CD8-positive, alpha-beta T cell (primary cell): ENCODE measurements at regions of chr1 and their contacts with region 1.

Region 1: DNA sequence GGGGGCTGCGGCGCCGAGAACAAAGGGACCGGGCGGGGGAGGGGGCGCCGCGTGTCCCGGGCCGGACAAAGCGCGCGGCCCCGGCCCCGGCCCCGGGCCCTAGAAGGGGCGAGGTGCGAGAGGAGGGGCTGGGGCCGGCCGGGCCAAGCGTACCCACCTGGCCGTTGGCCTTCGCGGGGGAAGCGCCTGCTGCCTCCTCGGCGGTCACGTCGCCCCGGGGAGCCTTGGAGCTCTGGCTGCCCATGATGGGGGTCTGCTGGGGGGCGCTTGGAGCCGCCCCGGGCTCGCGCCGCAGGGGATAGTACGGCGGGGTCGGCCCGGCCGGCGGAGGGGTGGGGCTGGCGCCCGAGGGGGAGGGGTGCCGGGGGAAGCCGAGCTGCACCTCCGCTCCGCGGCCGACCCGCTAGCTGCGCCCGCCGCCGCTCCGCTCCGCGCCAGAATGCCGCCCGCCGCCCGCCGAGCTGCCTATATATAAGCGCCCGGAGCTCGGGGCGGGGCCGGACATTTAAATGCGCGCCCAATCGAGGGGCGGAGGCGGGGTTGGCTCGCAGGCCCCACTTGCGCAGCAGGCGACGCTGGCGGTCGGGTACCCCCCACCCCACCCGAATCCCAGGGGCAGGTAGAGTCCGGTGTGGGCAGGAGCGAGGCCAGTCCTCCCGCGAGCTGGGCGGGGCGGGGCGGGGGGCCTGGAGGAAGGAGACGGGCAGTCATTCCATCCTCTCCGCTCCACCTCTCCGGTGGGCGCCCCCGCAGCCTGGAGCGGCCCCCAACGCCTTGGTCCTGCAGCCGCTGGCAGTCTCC is at the start of gene MARCKSL1:
- DNase-seq: peak; percentile 75 to 94 (median 86)
- ATAC-seq: peak; percentile 70
- H3K4me3 ChIP-seq: peak within 1 kb of the TSS; percentile 45 to 50
- H3K4me3 Mint-ChIP-seq: peak within 1 kb of the TSS; percentile 83
- H3K27ac ChIP-seq: peak within 1 kb of the TSS in 1 of 2 experiments; percentile 22
- H3K27ac Mint-ChIP-seq: peak within 1 kb of the TSS; percentile 77
- H3K4me1 ChIP-seq: peaks cover 27% of the 10 kb centered on the region
- H3K4me1 Mint-ChIP-seq: peaks cover 35% of the 10 kb centered on the region
- H3K27me3 ChIP-seq: no peaks in the 10 kb centered on the region
- H3K27me3 Mint-ChIP-seq: no peaks in the 10 kb centered on the region
- CTCF ChIP-seq: no peak
- total RNA-seq, gene MARCKSL1: 30.5 to 30.7 TPM

Region 2: GRCh38 chr1:32240140-32240951 is 95.6 kb before region 1 on chr1:
- CTCF ChIA-PET with region 1: interaction called, 5 read pairs
- POLR2A ChIA-PET with region 1: interaction called, 33 read pairs
- intact Hi-C with region 1: loop called in 1 of 2 experiments (anchors 2 kb)
- DNase-seq: peak in 8 of 9 experiments; percentile 26 to 85 (median 76)
- ATAC-seq: peak; percentile 69
- H3K4me3 ChIP-seq: peak overlapping the region; percentile 76 to 89
- H3K4me3 Mint-ChIP-seq: peak overlapping the region; percentile 90
- H3K27ac ChIP-seq: peak overlapping the region; percentile 22 to 49
- H3K27ac Mint-ChIP-seq: peak overlapping the region; percentile 62
- H3K4me1 ChIP-seq: peaks cover 26% of the 10 kb centered on the region
- H3K4me1 Mint-ChIP-seq: peaks cover 23% of the 10 kb centered on the region
- H3K27me3 ChIP-seq: no peaks in the 10 kb centered on the region
- H3K27me3 Mint-ChIP-seq: no peaks in the 10 kb centered on the region
- CTCF ChIP-seq: peak; percentile 24

Region 3: DNA sequence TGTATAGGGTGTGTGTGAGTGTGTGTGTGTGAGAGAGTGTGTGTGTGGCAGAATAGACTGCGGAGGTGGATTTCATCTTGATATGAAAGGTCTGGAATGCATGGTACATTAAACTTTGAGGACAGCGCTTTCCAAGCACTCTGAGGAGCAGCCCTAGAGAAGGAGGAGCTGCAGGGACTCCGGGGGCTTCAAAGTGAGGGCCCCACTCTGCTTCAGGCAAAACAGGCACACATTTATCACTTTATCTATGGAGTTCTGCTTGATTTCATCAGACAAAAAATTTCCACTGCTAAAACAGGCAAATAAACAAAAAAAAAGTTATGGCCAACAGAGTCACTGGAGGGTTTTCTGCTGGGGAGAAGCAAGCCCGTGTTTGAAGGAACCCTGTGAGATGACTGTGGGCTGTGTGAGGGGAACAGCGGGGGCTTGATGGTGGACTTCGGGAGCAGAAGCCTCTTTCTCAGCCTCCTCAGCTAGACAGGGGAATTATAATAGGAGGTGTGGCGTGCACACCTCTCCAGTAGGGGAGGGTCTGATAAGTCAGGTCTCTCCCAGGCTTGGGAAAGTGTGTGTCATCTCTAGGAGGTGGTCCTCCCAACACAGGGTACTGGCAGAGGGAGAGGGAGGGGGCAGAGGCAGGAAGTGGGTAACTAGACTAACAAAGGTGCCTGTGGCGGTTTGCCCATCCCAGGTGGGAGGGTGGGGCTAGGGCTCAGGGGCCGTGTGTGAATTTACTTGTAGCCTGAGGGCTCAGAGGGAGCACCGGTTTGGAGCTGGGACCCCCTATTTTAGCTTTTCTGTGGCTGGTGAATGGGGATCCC is 62.4 kb before region 1 on chr1:
- CTCF ChIA-PET with region 1: no interaction called
- POLR2A ChIA-PET with region 1: interaction called, 5 read pairs
- intact Hi-C with region 1: loop called in 1 of 2 experiments (anchors 1 kb)
- DNase-seq: peak; percentile 58 to 96 (median 87)
- ATAC-seq: peak; percentile 88
- H3K4me3 ChIP-seq: peak overlapping the region; percentile 23 to 53
- H3K4me3 Mint-ChIP-seq: peak overlapping the region; percentile 83
- H3K27ac ChIP-seq: peak overlapping the region; percentile 36 to 77
- H3K27ac Mint-ChIP-seq: peak overlapping the region; percentile 98
- H3K4me1 ChIP-seq: peaks cover 78% of the 10 kb centered on the region
- H3K4me1 Mint-ChIP-seq: peaks cover 67% of the 10 kb centered on the region
- H3K27me3 ChIP-seq: no peaks in the 10 kb centered on the region
- H3K27me3 Mint-ChIP-seq: no peaks in the 10 kb centered on the region
- CTCF ChIP-seq: no peak

Region 4: GRCh38 chr1:32351399-32352238 is 15.6 kb after region 1 on chr1:
- CTCF ChIA-PET with region 1: interaction called, 9 read pairs
- POLR2A ChIA-PET with region 1: interaction called, 32 read pairs
- intact Hi-C with region 1: loop called (anchors 1 kb)
- DNase-seq: peak; percentile 81 to 97 (median 90)
- ATAC-seq: peak; percentile 95
- H3K4me3 ChIP-seq: peak overlapping the region; percentile 57 to 85
- H3K4me3 Mint-ChIP-seq: peak overlapping the region; percentile 81
- H3K27ac ChIP-seq: peak overlapping the region; percentile 60 to 69
- H3K27ac Mint-ChIP-seq: peak overlapping the region; percentile 49
- H3K4me1 ChIP-seq: peaks cover 30% of the 10 kb centered on the region
- H3K4me1 Mint-ChIP-seq: peaks cover 49% of the 10 kb centered on the region
- H3K27me3 ChIP-seq: no peaks in the 10 kb centered on the region
- H3K27me3 Mint-ChIP-seq: no peaks in the 10 kb centered on the region
- CTCF ChIP-seq: no peak

Region 5: DNA sequence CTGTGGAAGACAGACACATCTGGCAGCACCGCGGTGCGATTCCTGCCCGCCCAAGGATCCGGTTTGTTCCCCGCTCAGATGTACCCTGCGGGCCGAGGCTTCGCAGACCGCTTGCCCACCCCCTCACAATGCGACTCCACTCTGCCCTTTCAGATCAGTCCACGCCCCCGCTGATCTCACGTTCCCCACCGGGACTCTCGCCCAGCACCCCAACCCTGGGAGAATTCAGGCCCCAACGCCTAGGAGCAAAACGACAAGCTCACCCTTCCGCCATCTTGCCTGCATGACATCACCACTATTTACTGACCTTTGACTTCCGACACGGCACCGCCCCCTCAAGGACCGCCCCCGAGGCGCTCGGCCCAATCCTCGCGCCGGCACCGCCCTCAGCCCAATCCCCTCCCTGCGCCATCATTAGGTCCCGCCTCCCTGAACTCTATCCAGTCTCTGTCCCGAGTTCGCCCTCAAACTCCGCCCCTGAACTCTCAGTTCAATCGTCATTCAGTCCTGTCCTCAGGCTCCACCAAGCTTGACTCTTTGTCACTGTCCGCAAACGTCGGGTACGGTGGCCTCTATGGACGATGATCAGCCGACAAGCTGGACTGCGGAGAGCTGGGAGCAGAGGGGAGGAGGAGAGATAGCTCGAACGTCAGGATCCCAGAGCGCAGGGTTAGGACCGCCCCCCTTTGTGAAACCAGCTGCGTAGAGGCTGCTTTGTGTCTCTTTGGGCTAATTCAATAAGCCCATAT is 58.3 kb after region 1 on chr1 and contains the start of gene BSDC1:
- CTCF ChIA-PET with region 1: no interaction called
- POLR2A ChIA-PET with region 1: interaction called, 30 read pairs
- intact Hi-C with region 1: loop called (anchors 1 kb)
- DNase-seq: peak; percentile 97 to 99 (median 98)
- ATAC-seq: peak; percentile 98
- H3K4me3 ChIP-seq: peak within 1 kb of the TSS; percentile 75 to 92
- H3K4me3 Mint-ChIP-seq: peak within 1 kb of the TSS; percentile 99
- H3K27ac ChIP-seq: peak within 1 kb of the TSS; percentile 86 to 98
- H3K27ac Mint-ChIP-seq: peak within 1 kb of the TSS; percentile 100
- H3K4me1 ChIP-seq: peaks cover 11% of the 10 kb centered on the region
- H3K4me1 Mint-ChIP-seq: peaks cover 31% of the 10 kb centered on the region
- H3K27me3 ChIP-seq: no peaks in the 10 kb centered on the region
- H3K27me3 Mint-ChIP-seq: no peaks in the 10 kb centered on the region
- CTCF ChIP-seq: no peak
- total RNA-seq, gene BSDC1: 189 to 201 TPM